ENCODE measurements at regions of chr19 and their contacts with region 1.

Region 1: DNA sequence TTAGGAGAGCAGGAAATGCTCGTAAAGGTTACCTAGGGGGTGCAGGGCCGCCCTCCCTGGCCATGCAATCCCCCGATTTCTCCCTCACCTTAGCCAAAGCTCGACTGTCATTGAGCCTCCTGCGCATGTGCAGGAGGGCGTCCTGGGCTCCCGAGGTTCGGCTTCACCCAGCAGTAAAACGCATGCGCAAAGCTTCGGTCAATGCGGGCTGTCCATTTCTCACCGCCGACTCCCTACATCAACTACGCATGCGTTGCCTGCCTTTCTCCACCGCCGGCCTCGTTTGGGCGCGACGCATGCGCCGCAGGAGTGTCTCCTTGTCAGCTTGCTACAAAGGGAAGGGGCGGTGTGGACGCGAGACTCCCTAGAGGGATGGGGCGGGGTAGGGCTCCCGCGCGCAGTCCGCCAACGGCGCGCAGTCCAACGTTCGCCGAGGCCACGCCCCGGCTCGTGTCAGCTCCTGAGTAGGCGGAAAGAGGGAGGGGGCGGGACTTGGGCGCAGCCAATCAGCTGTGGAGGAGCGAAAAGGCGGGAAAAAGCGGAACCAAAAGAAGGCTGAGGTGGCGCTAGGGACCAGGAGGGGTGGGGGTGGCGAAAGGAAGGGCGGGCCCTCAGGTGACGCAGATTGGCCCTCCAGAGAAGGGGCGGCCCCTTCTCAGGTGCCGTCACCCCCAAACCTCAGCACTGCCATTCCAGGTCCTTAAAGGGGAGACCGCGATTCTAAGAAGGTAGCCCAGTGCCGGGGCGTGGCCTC is at the starts of genes SYNGR4 and TMEM143:
- DNase-seq: peak; percentile 93 to 100
- ATAC-seq: peak; percentile 88 to 97 (median 88)
- H3K4me3 ChIP-seq: peak within 1 kb of the TSS; percentile 55
- H3K4me3 Mint-ChIP-seq: peak within 1 kb of the TSS; percentile 90
- H3K27ac ChIP-seq: peak within 1 kb of the TSS; percentile 94
- H3K27ac Mint-ChIP-seq: peak within 1 kb of the TSS; percentile 90 to 99
- H3K4me1 ChIP-seq: peaks cover 18% of the 10 kb centered on the region
- H3K4me1 Mint-ChIP-seq: peaks cover 14 to 23% of the 10 kb centered on the region in 2 donors
- H3K27me3 ChIP-seq: no peaks in the 10 kb centered on the region
- H3K27me3 Mint-ChIP-seq: no peaks in the 10 kb centered on the region
- CTCF ChIP-seq: no peak
- total RNA-seq, gene SYNGR4: not detected
- total RNA-seq, gene TMEM143: 10.2 to 12.3 (median 11.1) TPM

Region 2: DNA sequence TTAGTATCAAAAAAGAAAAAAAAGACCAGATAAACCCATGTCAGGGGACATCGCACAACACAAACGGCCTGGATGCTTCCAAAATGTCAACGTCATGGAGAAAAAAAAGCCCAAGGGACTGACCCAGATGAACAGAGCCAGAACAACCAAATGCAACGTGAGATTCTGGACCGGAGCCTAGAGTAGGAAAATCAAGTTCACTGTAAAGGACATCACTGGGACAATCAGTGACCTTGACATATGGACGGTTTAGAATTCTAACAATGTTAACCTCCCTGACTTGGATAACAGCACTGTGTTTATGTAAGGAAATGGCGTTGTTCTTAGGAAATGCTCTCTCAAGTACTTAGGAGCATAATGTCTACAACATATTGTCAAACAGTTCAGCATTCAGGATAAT is 53.8 kb before region 1 on chr19:
- intact Hi-C with region 1: no loop called
- DNase-seq: no peak
- ATAC-seq: no peak
- H3K4me3 ChIP-seq: no peak overlapping the region
- H3K4me3 Mint-ChIP-seq: no peak overlapping the region
- H3K27ac ChIP-seq: no peak overlapping the region
- H3K27ac Mint-ChIP-seq: no peak overlapping the region
- H3K4me1 ChIP-seq: no peaks in the 10 kb centered on the region
- H3K4me1 Mint-ChIP-seq: no peaks in the 10 kb centered on the region
- H3K27me3 ChIP-seq: no peaks in the 10 kb centered on the region
- H3K27me3 Mint-ChIP-seq: no peaks in the 10 kb centered on the region
- CTCF ChIP-seq: no peak

Region 3: DNA sequence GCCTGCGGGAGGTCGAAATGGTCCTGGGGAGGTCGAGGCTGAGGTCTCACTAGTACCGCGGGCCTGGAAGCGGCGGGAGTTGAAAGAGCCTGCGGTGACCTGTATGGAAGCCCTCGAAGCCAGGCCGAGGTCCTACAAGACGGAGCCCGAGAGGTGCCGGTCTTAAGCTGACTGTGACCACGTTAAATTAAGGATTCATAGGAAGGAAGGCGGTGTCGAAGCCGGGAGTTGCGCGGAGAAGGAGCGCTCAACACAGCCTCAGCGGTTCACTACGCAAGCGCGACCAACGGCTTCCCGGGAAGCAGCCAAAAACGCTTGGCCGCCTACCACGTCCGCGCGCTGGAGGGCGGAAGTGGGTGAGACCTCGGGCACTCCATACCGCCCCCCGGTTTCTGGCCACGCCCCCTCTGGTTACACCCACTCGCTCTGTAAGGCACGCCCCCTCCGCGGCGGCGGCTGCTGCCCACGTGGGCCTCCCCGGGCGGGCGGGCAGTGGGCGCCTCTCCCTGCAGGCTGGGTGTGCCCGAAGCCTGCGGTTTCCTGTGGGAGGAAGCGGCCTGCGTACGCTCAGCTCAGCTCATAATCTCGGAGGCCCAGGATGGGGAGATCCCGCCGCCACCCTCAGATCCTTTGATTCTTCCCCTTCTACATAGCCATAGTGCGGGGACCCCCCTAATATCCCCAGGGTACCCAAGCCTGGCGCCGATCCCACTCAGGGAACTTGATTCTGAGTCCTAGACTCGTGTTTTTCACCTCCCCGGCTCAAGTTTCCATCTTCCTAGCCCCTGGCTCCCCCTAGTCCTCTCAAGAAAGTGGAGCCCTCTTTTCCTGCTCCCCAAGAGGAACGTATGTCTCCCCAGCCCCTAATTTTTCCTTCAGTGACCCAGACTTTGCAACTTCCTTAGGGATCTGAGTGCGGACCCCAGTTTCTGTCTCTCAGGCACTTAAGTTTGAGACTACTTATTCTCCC is 42.1 kb before region 1 on chr19:
- intact Hi-C with region 1: loop called (anchors 5 kb)
- DNase-seq: peak; percentile 99 to 100
- ATAC-seq: peak; percentile 65 to 91 (median 77)
- H3K4me3 ChIP-seq: peak overlapping the region; percentile 73
- H3K4me3 Mint-ChIP-seq: peak overlapping the region; percentile 95
- H3K27ac ChIP-seq: peak overlapping the region; percentile 99
- H3K27ac Mint-ChIP-seq: peak overlapping the region; percentile 99 to 100
- H3K4me1 ChIP-seq: peaks cover 63% of the 10 kb centered on the region
- H3K4me1 Mint-ChIP-seq: peaks cover 55 to 68% of the 10 kb centered on the region in 2 donors
- H3K27me3 ChIP-seq: no peaks in the 10 kb centered on the region
- H3K27me3 Mint-ChIP-seq: no peaks in the 10 kb centered on the region
- CTCF ChIP-seq: no peak

Region 4: GRCh38 chr19:48333467-48334384 is 30.3 kb before region 1 on chr19:
- intact Hi-C with region 1: loop called (anchors 2 kb)
- DNase-seq: peak; percentile 93 to 97
- ATAC-seq: peak; percentile 67 to 85 (median 67)
- H3K4me3 ChIP-seq: peak overlapping the region; percentile 80
- H3K4me3 Mint-ChIP-seq: peak overlapping the region; percentile 99
- H3K27ac ChIP-seq: peak overlapping the region; percentile 98
- H3K27ac Mint-ChIP-seq: peak overlapping the region; percentile 100
- H3K4me1 ChIP-seq: peaks cover 55% of the 10 kb centered on the region
- H3K4me1 Mint-ChIP-seq: peaks cover 53 to 56% of the 10 kb centered on the region in 2 donors
- H3K27me3 ChIP-seq: no peaks in the 10 kb centered on the region
- H3K27me3 Mint-ChIP-seq: no peaks in the 10 kb centered on the region
- CTCF ChIP-seq: peak; percentile 82

Region 5: DNA sequence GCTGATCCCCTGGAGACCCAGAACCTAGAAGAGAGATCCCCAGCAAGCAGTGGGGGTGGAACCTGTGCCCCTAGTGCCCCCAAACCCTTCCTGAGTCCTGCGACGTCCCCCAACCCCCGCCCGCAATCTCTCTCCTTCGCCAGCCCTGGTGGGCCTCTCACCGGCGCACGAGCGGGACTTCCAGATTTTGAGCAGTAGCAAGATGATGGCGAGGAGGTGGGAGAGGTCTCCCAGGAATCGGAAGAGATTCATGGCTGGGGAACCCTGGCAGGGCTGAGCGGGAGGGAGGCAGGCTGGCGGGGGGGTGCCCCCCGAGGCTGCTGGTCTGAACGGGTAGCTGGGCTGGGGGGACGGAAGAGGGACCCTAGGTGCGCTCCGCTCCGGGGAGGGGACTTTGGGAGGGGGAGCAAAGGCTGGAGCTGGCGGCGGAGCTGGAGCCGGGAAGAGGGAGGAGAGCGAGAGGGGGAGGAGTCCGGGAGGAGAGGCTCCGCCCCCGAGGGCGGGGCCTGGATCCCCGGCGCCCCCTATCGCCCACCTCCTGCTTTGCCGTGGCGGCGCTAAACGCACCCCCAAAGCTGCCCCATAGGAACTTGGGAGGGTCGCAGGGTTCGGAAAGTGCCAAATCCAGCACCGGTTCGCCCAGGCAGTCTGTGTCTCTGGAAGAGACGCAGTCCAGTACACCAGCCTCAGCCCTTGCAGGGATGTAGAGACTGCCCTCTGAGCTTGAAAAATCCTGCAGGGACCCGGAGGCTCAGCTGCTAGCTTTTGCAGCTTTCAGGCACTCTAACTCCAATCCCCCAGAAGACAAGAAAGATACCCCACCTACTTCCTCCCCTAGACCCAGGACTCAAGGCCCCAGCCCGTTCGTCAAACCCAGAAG is 27.4 kb after region 1 on chr19 and contains the start of gene KDELR1:
- intact Hi-C with region 1: loop called (anchors 1 kb)
- DNase-seq: peak; percentile 83 to 85
- ATAC-seq: peak; percentile 89 to 93 (median 90)
- H3K4me3 ChIP-seq: peak within 1 kb of the TSS; percentile 79
- H3K4me3 Mint-ChIP-seq: peak within 1 kb of the TSS; percentile 92
- H3K27ac ChIP-seq: peak within 1 kb of the TSS; percentile 88
- H3K27ac Mint-ChIP-seq: peak within 1 kb of the TSS; percentile 84 to 85
- H3K4me1 ChIP-seq: peaks cover 50% of the 10 kb centered on the region
- H3K4me1 Mint-ChIP-seq: peaks cover 13 to 51% of the 10 kb centered on the region in 2 donors
- H3K27me3 ChIP-seq: peaks cover 31% of the 10 kb centered on the region
- H3K27me3 Mint-ChIP-seq: peaks cover 0 to 33% of the 10 kb centered on the region in 2 donors
- CTCF ChIP-seq: peak; percentile 83
- total RNA-seq, gene KDELR1: 41.5 to 47.5 (median 46.0) TPM

Region 6: GRCh38 chr19:48403606-48404005 is 39.6 kb after region 1 on chr19:
- intact Hi-C with region 1: loop called (anchors 1 kb)
- DNase-seq: peak in 1 of 2 donors; percentile 77
- ATAC-seq: peak; percentile 75 to 81 (median 78)
- H3K4me3 ChIP-seq: no peak overlapping the region
- H3K4me3 Mint-ChIP-seq: peak overlapping the region; percentile 7
- H3K27ac ChIP-seq: no peak overlapping the region
- H3K27ac Mint-ChIP-seq: peak overlapping the region in 1 of 2 donors; percentile 49
- H3K4me1 ChIP-seq: peaks cover 30% of the 10 kb centered on the region
- H3K4me1 Mint-ChIP-seq: peaks cover 33 to 36% of the 10 kb centered on the region in 2 donors
- H3K27me3 ChIP-seq: peaks cover 3% of the 10 kb centered on the region
- H3K27me3 Mint-ChIP-seq: peaks cover 14 to 22% of the 10 kb centered on the region in 2 donors
- CTCF ChIP-seq: no peak

Region 7: GRCh38 chr19:48419158-48419920 is 55.4 kb after region 1 on chr19:
- intact Hi-C with region 1: loop called (anchors 1 kb)
- DNase-seq: peak; percentile 66 to 82
- ATAC-seq: peak; percentile 86 to 88 (median 87)
- H3K4me3 ChIP-seq: peak overlapping the region; percentile 4
- H3K4me3 Mint-ChIP-seq: peak overlapping the region; percentile 85
- H3K27ac ChIP-seq: no peak overlapping the region
- H3K27ac Mint-ChIP-seq: peak overlapping the region; percentile 76 to 91
- H3K4me1 ChIP-seq: peaks cover 32% of the 10 kb centered on the region
- H3K4me1 Mint-ChIP-seq: peaks cover 14 to 29% of the 10 kb centered on the region in 2 donors
- H3K27me3 ChIP-seq: peaks cover 13% of the 10 kb centered on the region
- H3K27me3 Mint-ChIP-seq: peaks cover 0 to 12% of the 10 kb centered on the region in 2 donors
- CTCF ChIP-seq: no peak